Motor neuron (in vitro differentiated cells): ENCODE measurements at regions of chr15 and their contacts with region 1.

Region 1: DNA sequence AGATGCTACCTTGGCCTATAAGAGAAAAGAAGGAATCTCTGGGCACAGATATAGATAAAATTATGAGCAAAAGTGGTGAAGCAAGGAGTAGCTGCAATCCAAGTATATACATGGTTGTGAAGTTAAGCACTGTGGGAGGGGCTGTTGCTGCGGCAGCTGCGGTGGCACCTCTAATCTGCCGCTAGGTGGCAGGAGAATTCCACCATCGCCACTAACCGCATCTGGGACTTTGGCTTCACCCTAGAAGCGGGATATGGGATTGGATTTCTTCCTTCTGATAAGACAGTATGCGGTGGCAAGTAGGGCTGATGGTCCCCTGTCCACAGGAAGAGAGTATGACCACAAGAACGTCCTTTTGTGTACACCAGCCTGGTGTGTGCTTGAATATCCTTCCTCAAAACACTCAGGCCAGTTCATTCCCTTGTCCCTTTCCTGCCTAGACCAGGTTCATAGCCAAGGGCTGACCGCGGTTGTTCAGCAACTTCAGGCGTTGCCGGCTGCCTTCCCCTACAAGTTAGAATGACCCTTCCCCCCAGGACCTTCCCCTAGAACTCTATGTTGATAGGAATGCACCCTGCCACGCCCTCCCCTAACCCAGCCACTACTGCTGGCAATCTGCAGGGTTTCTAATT is 5.1 kb downstream of the MAGEL2 start:
- ATAC-seq: peak; percentile 55 to 93 (median 67)
- H3K4me3 ChIP-seq: no peak overlapping the region
- H3K27ac ChIP-seq: no peak overlapping the region
- H3K4me1 ChIP-seq: peaks cover 5 to 16% of the 10 kb centered on the region in 2 donors

Region 2: DNA sequence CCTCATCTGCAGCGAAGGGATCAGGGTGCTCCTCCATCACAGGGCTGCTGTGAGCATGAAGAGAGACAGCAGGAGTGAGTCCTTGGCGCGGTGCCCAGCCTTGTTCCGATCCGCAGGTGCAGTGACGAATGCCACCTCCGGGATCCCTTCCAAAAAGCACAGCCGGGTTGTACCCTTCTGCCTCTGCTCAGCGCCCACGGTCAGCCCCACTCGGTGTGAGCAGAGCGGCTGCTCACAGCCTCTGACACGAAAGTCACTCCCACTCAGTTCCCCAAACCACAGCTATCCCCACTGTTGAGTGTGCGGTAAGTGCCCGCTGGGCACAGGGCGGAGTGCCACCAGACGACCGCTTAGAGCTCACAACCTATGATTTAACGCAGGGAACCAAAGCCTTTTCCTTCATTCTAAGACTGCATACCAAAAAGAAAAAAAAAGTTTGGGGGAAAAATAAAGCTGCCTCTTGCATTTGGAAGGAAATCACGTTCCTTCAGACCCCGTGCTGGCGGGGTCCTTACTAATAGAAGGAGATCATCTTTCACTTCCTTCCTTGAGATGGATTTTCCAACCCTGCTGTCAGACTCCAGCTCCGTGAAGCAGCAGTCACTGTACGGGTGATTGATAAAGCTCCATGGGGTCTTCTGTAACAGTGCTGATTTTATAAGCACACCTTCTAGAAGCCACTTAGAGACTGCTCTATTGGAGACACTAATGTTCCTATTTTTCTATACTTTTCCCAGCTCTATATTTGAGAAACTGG is 568.5 kb before region 1 on chr15:
- in situ Hi-C with region 1: loop called in 1 of 9 experiments (anchors 25 kb)
- ATAC-seq: peak in 2 of 8 experiments; percentile 52 to 56
- H3K4me3 ChIP-seq: no peak overlapping the region
- H3K27ac ChIP-seq: no peak overlapping the region
- H3K4me1 ChIP-seq: no peaks in the 10 kb centered on the region

Region 3: GRCh38 chr15:23467110-23467600 is 175.4 kb before region 1 on chr15:
- in situ Hi-C with region 1: no loop called
- ATAC-seq: peak in 3 of 8 experiments; percentile 50 to 75 (median 59)
- H3K4me3 ChIP-seq: no peak overlapping the region
- H3K27ac ChIP-seq: no peak overlapping the region
- H3K4me1 ChIP-seq: peaks cover 0 to 4% of the 10 kb centered on the region in 2 donors

Region 4: GRCh38 chr15:23477920-23478319 is 164.6 kb before region 1 on chr15:
- in situ Hi-C with region 1: no loop called
- ATAC-seq: no peak
- H3K4me3 ChIP-seq: no peak overlapping the region
- H3K27ac ChIP-seq: no peak overlapping the region
- H3K4me1 ChIP-seq: no peaks in the 10 kb centered on the region

Region 5: DNA sequence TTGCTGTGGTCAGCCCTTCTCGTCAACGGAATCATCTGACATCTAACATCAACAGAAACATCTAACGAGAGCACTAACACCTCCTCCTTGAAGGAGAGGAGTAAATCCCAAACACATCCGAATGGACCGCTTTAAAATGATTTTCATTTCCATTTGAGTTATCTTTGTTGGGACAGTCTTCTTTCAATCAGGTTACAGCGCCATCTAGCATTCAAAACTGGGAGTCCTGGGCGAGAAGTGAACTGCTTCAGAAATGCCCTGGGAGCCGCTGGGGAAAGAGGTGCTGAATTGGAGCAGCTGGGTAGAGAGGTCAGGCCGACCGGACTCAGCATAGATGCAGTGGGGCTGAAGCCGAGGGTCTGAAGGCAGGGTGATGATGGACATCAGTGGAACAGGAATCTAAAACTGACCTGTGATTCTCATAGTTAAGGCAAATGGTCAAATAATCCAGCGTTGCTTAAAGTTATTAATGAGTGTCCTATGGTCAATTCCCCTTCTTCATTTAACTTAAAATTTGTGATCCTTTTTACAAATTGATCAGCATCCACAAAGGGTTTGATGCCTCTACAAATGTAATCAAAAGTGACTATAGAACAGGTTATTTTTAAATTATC is 214.6 kb after region 1 on chr15:
- in situ Hi-C with region 1: loop called in 6 of 9 experiments (anchors 5 to 25 kb)
- ATAC-seq: peak in 7 of 8 experiments; percentile 40 to 62 (median 56)
- H3K4me3 ChIP-seq: peak overlapping the region in 1 of 5 donors; percentile 9
- H3K27ac ChIP-seq: no peak overlapping the region
- H3K4me1 ChIP-seq: peaks cover 24 to 29% of the 10 kb centered on the region in 2 donors

Region 6: GRCh38 chr15:23866832-23867231 is 224.3 kb after region 1 on chr15:
- in situ Hi-C with region 1: loop called in 7 of 9 experiments (anchors 5 to 25 kb)
- ATAC-seq: no peak
- H3K4me3 ChIP-seq: no peak overlapping the region
- H3K27ac ChIP-seq: no peak overlapping the region
- H3K4me1 ChIP-seq: no peaks in the 10 kb centered on the region

Region 7: GRCh38 chr15:23877502-23878412 is 235.2 kb after region 1 on chr15:
- in situ Hi-C with region 1: loop called in 3 of 9 experiments (anchors 10 to 25 kb)
- ATAC-seq: peak; percentile 36 to 100 (median 100)
- H3K4me3 ChIP-seq: peak overlapping the region; percentile 24 to 43 (median 35)
- H3K27ac ChIP-seq: no peak overlapping the region
- H3K4me1 ChIP-seq: no peaks in the 10 kb centered on the region